Naive thymus-derived CD4-positive, alpha-beta T cell (primary cell): ENCODE measurements at regions of chr4 and their contacts with region 1.

Region 1: GRCh38 chr4:146342600-146343192 is 128.4 kb downstream of the REELD1 start:
- DNase-seq: peak in 5 of 9 donors; percentile 27 to 43 (median 31)
- ATAC-seq: no peak
- H3K4me3 ChIP-seq: no peak overlapping the region
- H3K4me3 Mint-ChIP-seq: no peak overlapping the region
- H3K27ac ChIP-seq: no peak overlapping the region
- H3K27ac Mint-ChIP-seq: no peak overlapping the region
- H3K4me1 ChIP-seq: no peaks in the 10 kb centered on the region
- H3K4me1 Mint-ChIP-seq: peaks cover 0 to 12% (median 5%) of the 10 kb centered on the region in 7 donors
- H3K27me3 ChIP-seq: no peaks in the 10 kb centered on the region
- H3K27me3 Mint-ChIP-seq: no peaks in the 10 kb centered on the region

Region 2: DNA sequence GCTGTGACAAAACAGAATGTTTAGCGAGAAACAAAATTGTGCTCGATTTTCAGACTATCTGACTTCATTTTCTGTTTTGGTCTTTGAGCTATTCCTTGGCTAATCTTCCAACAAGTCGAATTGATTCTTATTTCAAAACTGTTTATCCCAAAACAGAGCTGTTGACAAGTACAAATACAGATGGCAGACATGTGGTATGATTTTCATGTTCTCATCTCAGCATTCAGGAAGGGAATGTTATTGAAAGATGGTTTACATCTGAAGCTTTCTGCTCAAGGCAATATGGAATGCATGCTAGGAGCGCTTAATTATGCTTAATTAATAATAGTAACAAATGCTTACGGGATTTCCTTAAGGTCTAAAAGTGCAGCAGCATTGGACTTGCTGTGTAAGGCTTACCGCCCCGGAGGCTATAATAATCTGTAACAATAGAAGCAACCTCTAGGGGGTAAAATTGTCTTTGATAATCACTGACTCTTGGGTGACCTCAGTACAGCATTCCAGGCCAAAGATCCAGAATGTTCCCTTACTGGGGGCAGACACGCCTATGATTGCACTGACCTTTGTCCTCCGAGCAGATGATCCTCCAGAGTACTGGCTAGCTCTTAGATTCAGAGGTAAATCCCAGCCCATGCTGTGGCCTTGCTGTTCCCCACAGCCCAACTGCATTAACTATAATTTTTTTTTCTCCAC is 150.8 kb before region 1 on chr4:
- CTCF ChIA-PET with region 1: no interaction called
- POLR2A ChIA-PET with region 1: no interaction called
- intact Hi-C with region 1: no loop called
- DNase-seq: no peak
- ATAC-seq: no peak
- H3K4me3 ChIP-seq: no peak overlapping the region
- H3K4me3 Mint-ChIP-seq: no peak overlapping the region
- H3K27ac ChIP-seq: no peak overlapping the region
- H3K27ac Mint-ChIP-seq: no peak overlapping the region
- H3K4me1 ChIP-seq: no peaks in the 10 kb centered on the region
- H3K4me1 Mint-ChIP-seq: peaks cover 0 to under 1% (median 0%) of the 10 kb centered on the region in 7 donors
- H3K27me3 ChIP-seq: no peaks in the 10 kb centered on the region
- H3K27me3 Mint-ChIP-seq: no peaks in the 10 kb centered on the region

Region 3: DNA sequence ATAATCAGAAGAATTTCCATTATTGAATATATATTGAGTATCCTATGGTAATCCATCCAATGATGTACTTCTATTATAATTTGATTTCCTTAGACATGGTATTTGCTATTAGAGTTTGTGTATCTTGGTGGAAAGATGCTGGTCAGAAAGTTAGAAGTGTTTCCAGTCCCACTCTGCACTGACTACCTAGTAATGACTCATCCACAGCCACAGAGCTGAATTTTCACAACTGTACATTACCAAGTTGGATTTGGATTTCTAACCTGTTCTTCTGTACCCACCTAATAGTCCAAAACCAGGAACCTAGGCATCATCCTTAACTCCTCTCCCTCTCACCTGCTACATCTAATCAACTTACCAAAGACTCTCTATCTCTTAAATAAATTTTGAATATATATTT is 17.1 kb after region 1 on chr4:
- CTCF ChIA-PET with region 1: no interaction called
- POLR2A ChIA-PET with region 1: no interaction called
- intact Hi-C with region 1: no loop called
- DNase-seq: no peak
- ATAC-seq: no peak
- H3K4me3 ChIP-seq: no peak overlapping the region
- H3K4me3 Mint-ChIP-seq: no peak overlapping the region
- H3K27ac ChIP-seq: no peak overlapping the region
- H3K27ac Mint-ChIP-seq: no peak overlapping the region
- H3K4me1 ChIP-seq: no peaks in the 10 kb centered on the region
- H3K4me1 Mint-ChIP-seq: peaks cover 0 to 8% (median 0%) of the 10 kb centered on the region in 7 donors
- H3K27me3 ChIP-seq: no peaks in the 10 kb centered on the region
- H3K27me3 Mint-ChIP-seq: no peaks in the 10 kb centered on the region

Region 4: GRCh38 chr4:146638801-146639605 is 296.3 kb after region 1 on chr4 and contains the start of gene POU4F2:
- CTCF ChIA-PET with region 1: no interaction called
- POLR2A ChIA-PET with region 1: no interaction called
- intact Hi-C with region 1: loop called in 1 of 2 experiments (anchors 5 kb)
- DNase-seq: no peak
- ATAC-seq: no peak
- H3K4me3 ChIP-seq: no peak within 1 kb of the TSS
- H3K4me3 Mint-ChIP-seq: peak within 1 kb of the TSS in 9 of 10 donors; percentile 14 to 78 (median 61)
- H3K27ac ChIP-seq: no peak within 1 kb of the TSS
- H3K27ac Mint-ChIP-seq: peak within 1 kb of the TSS in 1 of 9 donors; percentile 78
- H3K4me1 ChIP-seq: no peaks in the 10 kb centered on the region
- H3K4me1 Mint-ChIP-seq: peaks cover 11 to 32% (median 17%) of the 10 kb centered on the region in 7 donors
- H3K27me3 ChIP-seq: peaks cover 5 to 38% of the 10 kb centered on the region in 2 donors
- H3K27me3 Mint-ChIP-seq: peaks cover 80 to 88% (median 85%) of the 10 kb centered on the region in 5 donors
- total RNA-seq, gene POU4F2: not detected

Region 5: GRCh38 chr4:147019061-147019460 is 676.4 kb after region 1 on chr4:
- CTCF ChIA-PET with region 1: no interaction called
- POLR2A ChIA-PET with region 1: no interaction called
- intact Hi-C with region 1: loop called (anchors 2 to 5 kb)
- DNase-seq: peak in 8 of 9 donors; percentile 18 to 41 (median 40)
- ATAC-seq: peak; percentile 37
- H3K4me3 ChIP-seq: no peak overlapping the region
- H3K4me3 Mint-ChIP-seq: no peak overlapping the region
- H3K27ac ChIP-seq: no peak overlapping the region
- H3K27ac Mint-ChIP-seq: no peak overlapping the region
- H3K4me1 ChIP-seq: no peaks in the 10 kb centered on the region
- H3K4me1 Mint-ChIP-seq: no peaks in the 10 kb centered on the region
- H3K27me3 ChIP-seq: no peaks in the 10 kb centered on the region
- H3K27me3 Mint-ChIP-seq: peaks cover 0 to 5% (median 0%) of the 10 kb centered on the region in 5 donors

Region 6: GRCh38 chr4:147590249-147590920 is 1247.7 kb after region 1 on chr4:
- CTCF ChIA-PET with region 1: no interaction called
- POLR2A ChIA-PET with region 1: no interaction called
- intact Hi-C with region 1: loop called in 1 of 2 experiments (anchors 10 kb)
- DNase-seq: peak in 5 of 9 donors; percentile 7 to 26 (median 10)
- ATAC-seq: peak; percentile 47
- H3K4me3 ChIP-seq: no peak overlapping the region
- H3K4me3 Mint-ChIP-seq: no peak overlapping the region
- H3K27ac ChIP-seq: no peak overlapping the region
- H3K27ac Mint-ChIP-seq: no peak overlapping the region
- H3K4me1 ChIP-seq: no peaks in the 10 kb centered on the region
- H3K4me1 Mint-ChIP-seq: peaks cover 0 to 7% (median 3%) of the 10 kb centered on the region in 7 donors
- H3K27me3 ChIP-seq: no peaks in the 10 kb centered on the region
- H3K27me3 Mint-ChIP-seq: peaks cover 0 to 12% (median 5%) of the 10 kb centered on the region in 5 donors